Activated CD4-positive, alpha-beta memory T cell treated with anti-CD3 and anti-CD28 coated beads, Interleukin-2, amount 10 ng/mL, durations not matched to agents 7 days and 5 days (primary cell): ENCODE measurements at regions of chr2 and their contacts with region 1.

Region 1: GRCh38 chr2:101850450-101850849 is 141.3 kb upstream of the IL1R2 start:
- DNase-seq: no peak
- H3K4me3 Mint-ChIP-seq: no peak overlapping the region
- H3K27ac Mint-ChIP-seq: no peak overlapping the region
- H3K4me1 Mint-ChIP-seq: no peaks in the 10 kb centered on the region
- H3K27me3 Mint-ChIP-seq: no peaks in the 10 kb centered on the region

Region 2: GRCh38 chr2:101823347-101823791 is 27.1 kb before region 1 on chr2:
- CTCF ChIA-PET with region 1: interaction called, 11 read pairs
- POLR2A ChIA-PET with region 1: no interaction called
- DNase-seq: peak; percentile 73
- H3K4me3 Mint-ChIP-seq: peak overlapping the region; percentile 14
- H3K27ac Mint-ChIP-seq: no peak overlapping the region
- H3K4me1 Mint-ChIP-seq: peaks cover 50% of the 10 kb centered on the region
- H3K27me3 Mint-ChIP-seq: no peaks in the 10 kb centered on the region